ENCODE measurements at regions of chr16 and their contacts with region 1.

Region 1: GRCh38 chr16:25395528-25395927 is 137.9 kb upstream of the ZKSCAN2 start:
- DNase-seq: no peak
- ATAC-seq: no peak
- H3K4me3 ChIP-seq: no peak overlapping the region
- H3K27ac ChIP-seq: no peak overlapping the region
- H3K4me1 ChIP-seq: no peaks in the 10 kb centered on the region
- H3K27me3 ChIP-seq: no peaks in the 10 kb centered on the region
- CTCF ChIP-seq: no peak
- POLR2A ChIP-seq: no peak
- RAD21 ChIP-seq: no peak

Region 2: DNA sequence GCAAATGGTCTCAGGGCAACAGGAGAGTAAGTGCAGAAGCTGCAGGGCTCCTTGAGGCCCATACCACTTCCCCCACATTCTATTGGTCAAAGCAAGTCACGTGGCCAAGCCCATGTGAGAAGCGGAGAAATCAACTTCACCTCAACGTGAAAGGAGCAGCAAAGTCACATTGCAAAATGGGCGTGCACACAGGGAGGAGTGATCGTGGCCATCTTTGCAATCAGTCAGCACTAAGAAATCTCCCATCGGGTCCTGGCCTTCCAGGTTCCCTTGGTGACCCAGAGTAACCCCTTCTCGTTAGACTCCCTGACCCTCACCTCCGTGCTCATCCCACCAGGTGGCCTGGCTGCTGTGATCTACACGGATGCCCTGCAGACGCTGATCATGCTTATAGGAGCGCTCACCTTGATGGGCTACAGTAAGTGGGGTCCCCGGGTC is 511.8 kb before region 1 on chr16:
- CTCF ChIA-PET with region 1: no interaction called
- POLR2A ChIA-PET with region 1: no interaction called
- dilution Hi-C with region 1: no loop called
- in situ Hi-C with region 1: no loop called
- intact Hi-C with region 1: no loop called
- DNase-seq: no peak
- ATAC-seq: no peak
- H3K4me3 ChIP-seq: no peak overlapping the region
- H3K27ac ChIP-seq: no peak overlapping the region
- H3K4me1 ChIP-seq: no peaks in the 10 kb centered on the region; the same call in 1 of the 2 replicates
- H3K27me3 ChIP-seq: peaks cover 6% of the 10 kb centered on the region; the same call in 1 of the 2 replicates
- CTCF ChIP-seq: no peak
- POLR2A ChIP-seq: no peak
- RAD21 ChIP-seq: no peak

Region 3: DNA sequence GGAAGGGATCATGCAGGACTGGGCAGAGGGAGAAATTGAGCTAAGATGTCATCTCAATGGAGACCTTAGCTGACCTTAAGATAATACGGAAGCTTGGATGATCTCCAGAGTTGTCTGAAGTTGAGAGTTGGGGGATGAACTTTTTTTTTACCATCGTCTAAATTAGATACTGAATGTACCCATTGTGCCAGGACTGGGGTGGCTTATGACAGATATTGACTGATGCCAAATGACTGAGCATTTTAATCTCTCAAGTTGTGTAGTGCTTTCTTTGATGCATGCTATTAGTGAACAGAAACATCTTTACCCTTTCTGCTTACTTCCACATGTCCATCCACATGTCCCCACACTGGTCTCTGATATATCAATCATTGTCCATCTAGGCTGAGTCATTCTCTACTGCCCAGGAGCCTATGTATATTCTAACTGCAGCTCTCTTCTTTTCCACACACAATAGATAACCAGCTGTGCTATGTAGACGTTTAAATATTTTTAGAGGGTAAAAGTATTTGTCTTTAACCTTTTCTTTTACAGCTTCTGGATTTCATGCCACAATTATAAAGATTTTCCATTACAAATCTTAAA is 77.7 kb before region 1 on chr16:
- CTCF ChIA-PET with region 1: no interaction called
- POLR2A ChIA-PET with region 1: interaction called, 11 read pairs
- dilution Hi-C with region 1: no loop called
- in situ Hi-C with region 1: no loop called
- intact Hi-C with region 1: no loop called
- DNase-seq: no peak
- ATAC-seq: no peak
- H3K4me3 ChIP-seq: no peak overlapping the region
- H3K27ac ChIP-seq: no peak overlapping the region
- H3K4me1 ChIP-seq: no peaks in the 10 kb centered on the region
- H3K27me3 ChIP-seq: no peaks in the 10 kb centered on the region
- CTCF ChIP-seq: no peak
- POLR2A ChIP-seq: no peak
- RAD21 ChIP-seq: no peak

Measured in IMR-90 (cell line).